CD8-positive, alpha-beta T cell (primary cell): ENCODE measurements at regions of chr1 and their contacts with region 1.

Region 1: DNA sequence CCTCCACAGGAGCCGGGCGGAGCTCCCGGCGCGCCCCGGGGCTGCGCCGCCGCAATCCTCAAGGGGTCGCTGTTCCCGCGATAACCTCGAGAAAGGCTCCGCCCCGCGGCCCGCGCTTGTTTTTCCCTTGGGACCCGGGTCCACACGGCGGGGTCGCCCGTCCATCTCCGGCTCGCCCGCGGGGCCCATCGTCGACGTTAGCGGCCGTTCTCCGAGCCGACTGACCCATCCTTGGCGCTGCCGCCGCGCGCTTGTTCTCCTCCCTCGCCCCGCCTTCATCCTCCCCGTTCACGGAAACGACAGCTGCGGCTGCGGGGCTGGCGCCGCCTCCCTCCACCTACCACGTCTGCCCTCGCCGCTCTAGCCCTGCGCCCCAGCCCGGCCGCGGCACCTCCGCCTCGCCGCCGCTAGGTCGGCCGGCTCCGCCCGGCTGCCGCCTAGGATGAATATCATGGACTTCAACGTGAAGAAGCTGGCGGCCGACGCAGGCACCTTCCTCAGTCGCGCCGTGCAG is at the start of gene SH3GLB1:
- DNase-seq: peak; percentile 80 to 94 (median 90)
- ATAC-seq: peak; percentile 87
- H3K4me3 ChIP-seq: peak within 1 kb of the TSS; percentile 82 to 83
- H3K4me3 Mint-ChIP-seq: peak within 1 kb of the TSS; percentile 97
- H3K27ac ChIP-seq: peak within 1 kb of the TSS; percentile 81 to 92
- H3K27ac Mint-ChIP-seq: peak within 1 kb of the TSS; percentile 99
- H3K4me1 ChIP-seq: peaks cover 38% of the 10 kb centered on the region
- H3K4me1 Mint-ChIP-seq: peaks cover 57% of the 10 kb centered on the region
- H3K27me3 ChIP-seq: no peaks in the 10 kb centered on the region
- H3K27me3 Mint-ChIP-seq: no peaks in the 10 kb centered on the region
- CTCF ChIP-seq: peak; percentile 98
- total RNA-seq, gene SH3GLB1: 47.5 to 56.5 TPM

Region 2: GRCh38 chr1:85707990-85708828 is 996.3 kb before region 1 on chr1 and contains the start of gene ZNHIT6:
- CTCF ChIA-PET with region 1: no interaction called
- POLR2A ChIA-PET with region 1: interaction called, 3 read pairs
- intact Hi-C with region 1: loop called (anchors 1 to 10 kb)
- DNase-seq: peak; percentile 72 to 95 (median 84)
- ATAC-seq: peak; percentile 95
- H3K4me3 ChIP-seq: peak within 1 kb of the TSS; percentile 89 to 93
- H3K4me3 Mint-ChIP-seq: no peak within 1 kb of the TSS
- H3K27ac ChIP-seq: peak within 1 kb of the TSS; percentile 67 to 79
- H3K27ac Mint-ChIP-seq: no peak within 1 kb of the TSS
- H3K4me1 ChIP-seq: peaks cover 17% of the 10 kb centered on the region
- H3K4me1 Mint-ChIP-seq: peaks cover 30% of the 10 kb centered on the region
- H3K27me3 ChIP-seq: no peaks in the 10 kb centered on the region
- H3K27me3 Mint-ChIP-seq: no peaks in the 10 kb centered on the region
- CTCF ChIP-seq: no peak
- total RNA-seq, gene ZNHIT6: 14.4 to 15.3 TPM

Region 3: GRCh38 chr1:86499987-86500593 is 204.4 kb before region 1 on chr1:
- CTCF ChIA-PET with region 1: interaction called, 6 read pairs
- POLR2A ChIA-PET with region 1: interaction called, 3 read pairs
- intact Hi-C with region 1: loop called (anchors 1 to 10 kb)
- DNase-seq: peak in 2 of 9 experiments; percentile 43 to 60
- ATAC-seq: peak; percentile 63
- H3K4me3 ChIP-seq: no peak overlapping the region
- H3K4me3 Mint-ChIP-seq: no peak overlapping the region
- H3K27ac ChIP-seq: no peak overlapping the region
- H3K27ac Mint-ChIP-seq: no peak overlapping the region
- H3K4me1 ChIP-seq: peaks cover 7% of the 10 kb centered on the region
- H3K4me1 Mint-ChIP-seq: peaks cover 8% of the 10 kb centered on the region
- H3K27me3 ChIP-seq: peaks cover 0 to 2% of the 10 kb centered on the region in 2 experiments
- H3K27me3 Mint-ChIP-seq: peaks cover 10% of the 10 kb centered on the region
- CTCF ChIP-seq: peak; percentile 100

Region 4: DNA sequence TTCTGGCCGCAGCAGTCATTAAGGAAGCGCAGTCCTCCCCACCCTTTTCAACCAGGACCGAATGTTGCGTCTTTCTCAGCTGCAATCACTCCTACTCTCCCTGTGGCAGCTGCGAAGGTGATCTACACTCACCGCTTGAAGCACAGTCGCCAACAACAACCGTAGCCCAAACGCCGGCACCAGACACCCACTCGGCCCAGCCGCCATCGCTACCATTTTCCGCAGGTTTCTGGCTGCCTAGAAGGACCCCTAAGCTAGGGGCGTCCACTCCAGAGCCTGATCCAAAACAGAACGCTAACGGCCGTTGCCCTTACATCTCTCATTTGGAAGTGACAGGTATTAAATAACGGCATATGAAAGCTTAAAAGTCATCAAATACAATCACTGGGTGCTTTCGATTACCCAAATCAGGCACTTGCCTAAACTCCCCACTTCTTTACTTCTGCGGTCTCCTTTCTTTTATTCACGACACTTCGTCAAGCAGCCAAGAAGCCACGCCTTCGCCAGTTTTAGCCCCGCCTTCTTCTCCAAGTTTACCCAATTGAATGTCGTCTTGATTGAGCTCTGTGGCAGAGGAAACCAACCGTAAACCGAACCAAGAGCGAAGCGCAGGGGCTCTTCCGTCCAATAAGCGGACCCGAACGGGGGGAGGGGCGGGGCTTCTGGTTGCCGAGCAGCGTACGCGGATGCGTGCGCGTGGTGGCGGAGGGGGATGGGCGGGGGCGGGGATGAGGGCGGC is 209.6 kb after region 1 on chr1 and contains the start of gene SELENOF:
- CTCF ChIA-PET with region 1: interaction called, 7 read pairs
- POLR2A ChIA-PET with region 1: interaction called, 20 read pairs
- intact Hi-C with region 1: loop called (anchors 1 kb)
- DNase-seq: peak; percentile 97 to 100 (median 99)
- ATAC-seq: peak; percentile 85
- H3K4me3 ChIP-seq: peak within 1 kb of the TSS; percentile 91 to 99
- H3K4me3 Mint-ChIP-seq: no peak within 1 kb of the TSS
- H3K27ac ChIP-seq: peak within 1 kb of the TSS; percentile 76 to 99
- H3K27ac Mint-ChIP-seq: no peak within 1 kb of the TSS
- H3K4me1 ChIP-seq: peaks cover 35% of the 10 kb centered on the region
- H3K4me1 Mint-ChIP-seq: peaks cover 50% of the 10 kb centered on the region
- H3K27me3 ChIP-seq: no peaks in the 10 kb centered on the region
- H3K27me3 Mint-ChIP-seq: no peaks in the 10 kb centered on the region
- CTCF ChIP-seq: no peak
- total RNA-seq, gene SELENOF: 74.5 to 78.6 TPM

Region 5: DNA sequence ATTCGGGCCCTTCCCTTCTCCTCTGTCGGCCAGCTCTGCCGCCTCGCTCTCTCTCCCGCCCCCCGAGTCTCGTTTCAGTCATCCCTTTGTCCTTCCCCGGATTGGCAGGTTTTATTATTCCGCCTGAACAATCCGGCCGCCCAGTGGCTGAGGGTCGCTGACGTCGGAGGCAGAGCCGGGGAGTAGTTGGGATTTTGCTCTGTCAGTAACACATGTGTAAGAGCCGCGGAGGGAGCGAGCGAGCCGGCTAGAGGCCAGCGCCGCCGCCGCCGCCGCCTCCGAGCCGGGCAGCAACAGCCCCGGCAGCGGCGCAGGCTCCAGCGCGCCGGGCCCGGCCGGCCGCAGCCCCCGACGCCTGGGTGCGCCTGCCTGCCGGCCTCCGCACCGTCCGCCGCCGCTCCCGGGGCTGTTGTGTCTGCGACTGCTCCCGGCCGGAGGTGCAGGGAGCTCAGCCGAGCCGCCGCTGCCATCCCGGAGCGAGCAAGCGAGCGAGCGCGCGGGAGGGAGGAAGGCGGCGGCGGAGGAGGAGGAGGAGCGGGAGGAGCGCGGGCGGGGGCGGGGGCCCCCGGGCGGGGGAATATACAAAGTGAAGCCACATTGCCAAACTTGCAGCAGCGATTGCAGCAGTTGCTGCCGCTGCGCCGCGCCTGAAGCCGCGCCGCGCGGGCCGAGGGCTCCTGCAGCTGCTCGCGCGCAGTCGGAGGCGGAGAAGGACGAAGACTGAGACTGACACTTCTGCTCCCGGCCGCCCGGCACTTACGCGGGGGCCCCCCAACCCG is 623.9 kb after region 1 on chr1 and contains the start of gene LMO4:
- CTCF ChIA-PET with region 1: no interaction called
- POLR2A ChIA-PET with region 1: interaction called, 3 read pairs
- intact Hi-C with region 1: loop called (anchors 10 kb)
- DNase-seq: peak; percentile 69 to 95 (median 85)
- ATAC-seq: peak; percentile 70
- H3K4me3 ChIP-seq: peak within 1 kb of the TSS; percentile 50 to 66
- H3K4me3 Mint-ChIP-seq: peak within 1 kb of the TSS; percentile 95
- H3K27ac ChIP-seq: peak within 1 kb of the TSS; percentile 66 to 79
- H3K27ac Mint-ChIP-seq: peak within 1 kb of the TSS; percentile 95
- H3K4me1 ChIP-seq: peaks cover 28% of the 10 kb centered on the region
- H3K4me1 Mint-ChIP-seq: peaks cover 46% of the 10 kb centered on the region
- H3K27me3 ChIP-seq: no peaks in the 10 kb centered on the region
- H3K27me3 Mint-ChIP-seq: no peaks in the 10 kb centered on the region
- CTCF ChIP-seq: no peak
- total RNA-seq, gene LMO4: 16.8 to 17.6 TPM